ENCODE measurements at regions of chr3 and their contacts with region 1.

Region 1: GRCh38 chr3:109023656-109024254 is 70.1 kb upstream of the GUCA1C start:
- DNase-seq: peak; percentile 44
- H3K4me3 ChIP-seq: no peak overlapping the region
- H3K27ac ChIP-seq: no peak overlapping the region
- H3K4me1 ChIP-seq: no peaks in the 10 kb centered on the region
- H3K27me3 ChIP-seq: no peaks in the 10 kb centered on the region
- CTCF ChIP-seq: peak; percentile 41 to 50
- POLR2A ChIP-seq: no peak

Region 2: DNA sequence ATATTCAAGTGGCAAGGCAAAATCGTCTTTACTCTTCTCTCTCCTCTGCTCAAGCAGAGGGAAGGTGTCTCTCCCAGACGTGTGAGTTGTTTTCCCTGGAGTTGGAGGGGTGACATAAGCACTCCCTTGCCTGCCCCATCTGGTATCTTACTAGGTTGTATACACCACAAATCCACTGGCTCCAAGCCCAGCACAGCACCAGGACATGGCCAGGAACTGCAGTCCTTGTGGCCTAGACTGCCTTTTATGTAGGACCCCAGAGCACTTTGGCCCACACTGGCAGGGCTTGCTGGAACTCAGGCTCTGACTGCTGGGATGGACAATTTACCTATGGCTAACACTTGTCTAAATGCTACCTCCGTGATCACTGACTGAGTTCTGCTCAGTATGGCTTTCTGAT is 400.3 kb before region 1 on chr3:
- CTCF ChIA-PET with region 1: no interaction called
- POLR2A ChIA-PET with region 1: no interaction called
- dilution Hi-C with region 1: no loop called
- intact Hi-C with region 1: no loop called
- DNase-seq: no peak
- H3K4me3 ChIP-seq: no peak overlapping the region
- H3K27ac ChIP-seq: no peak overlapping the region
- H3K4me1 ChIP-seq: peaks cover 6% of the 10 kb centered on the region
- H3K27me3 ChIP-seq: no peaks in the 10 kb centered on the region
- CTCF ChIP-seq: no peak
- POLR2A ChIP-seq: no peak

Region 3: GRCh38 chr3:108972482-108972881 is 51.3 kb before region 1 on chr3:
- CTCF ChIA-PET with region 1: no interaction called
- POLR2A ChIA-PET with region 1: no interaction called
- dilution Hi-C with region 1: no loop called
- intact Hi-C with region 1: no loop called
- DNase-seq: no peak
- H3K4me3 ChIP-seq: no peak overlapping the region
- H3K27ac ChIP-seq: no peak overlapping the region
- H3K4me1 ChIP-seq: no peaks in the 10 kb centered on the region
- H3K27me3 ChIP-seq: no peaks in the 10 kb centered on the region
- CTCF ChIP-seq: no peak
- POLR2A ChIP-seq: no peak

Region 4: DNA sequence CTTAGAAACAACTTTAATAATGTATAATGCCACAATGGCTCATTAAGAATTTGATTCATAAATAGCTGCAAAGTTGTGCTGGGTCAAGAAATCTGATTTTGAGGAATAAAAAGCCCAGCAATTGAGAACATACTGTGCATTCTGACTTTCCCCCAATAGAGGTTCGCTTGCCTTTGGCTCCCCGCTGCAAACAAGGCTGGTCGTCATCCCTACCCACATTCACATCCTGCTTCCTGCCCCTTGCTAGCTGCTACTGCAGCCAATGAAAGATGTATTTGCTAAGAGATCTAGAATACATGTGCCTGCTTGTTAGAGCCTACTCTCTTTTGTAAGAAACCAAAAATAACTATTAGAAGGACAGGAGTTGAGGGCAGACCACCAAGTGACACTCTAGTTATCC is 18.3 kb before region 1 on chr3:
- CTCF ChIA-PET with region 1: interaction called, 10 read pairs
- POLR2A ChIA-PET with region 1: no interaction called
- dilution Hi-C with region 1: no loop called
- intact Hi-C with region 1: no loop called
- DNase-seq: no peak
- H3K4me3 ChIP-seq: no peak overlapping the region
- H3K27ac ChIP-seq: no peak overlapping the region
- H3K4me1 ChIP-seq: no peaks in the 10 kb centered on the region
- H3K27me3 ChIP-seq: no peaks in the 10 kb centered on the region
- CTCF ChIP-seq: no peak
- POLR2A ChIP-seq: no peak

Region 5: GRCh38 chr3:109045271-109046040 is 21.7 kb after region 1 on chr3:
- CTCF ChIA-PET with region 1: interaction called, 10 read pairs
- POLR2A ChIA-PET with region 1: no interaction called
- dilution Hi-C with region 1: no loop called
- intact Hi-C with region 1: no loop called
- DNase-seq: no peak
- H3K4me3 ChIP-seq: no peak overlapping the region
- H3K27ac ChIP-seq: no peak overlapping the region
- H3K4me1 ChIP-seq: no peaks in the 10 kb centered on the region
- H3K27me3 ChIP-seq: no peaks in the 10 kb centered on the region
- CTCF ChIP-seq: no peak
- POLR2A ChIP-seq: no peak

Region 6: DNA sequence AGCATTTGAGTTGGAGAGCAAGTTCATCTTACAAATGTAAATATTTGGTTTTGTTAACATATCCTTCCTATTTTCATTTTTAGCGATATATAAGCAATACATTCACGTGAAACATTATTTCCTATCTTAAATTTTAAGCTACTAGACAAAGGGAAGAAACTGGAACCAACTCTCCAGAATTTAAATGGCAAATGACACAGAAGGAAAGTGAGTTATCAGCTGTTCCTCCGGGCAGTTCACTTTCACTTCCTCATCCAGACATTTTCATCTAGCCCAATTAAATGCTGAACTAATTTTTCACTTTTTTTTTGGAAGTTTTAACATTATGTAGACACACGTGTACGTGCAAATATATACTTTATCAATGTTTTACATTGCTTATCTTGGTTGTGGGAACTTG is 35.5 kb after region 1 on chr3:
- CTCF ChIA-PET with region 1: interaction called, 10 read pairs
- POLR2A ChIA-PET with region 1: no interaction called
- dilution Hi-C with region 1: no loop called
- intact Hi-C with region 1: no loop called
- DNase-seq: no peak
- H3K4me3 ChIP-seq: no peak overlapping the region
- H3K27ac ChIP-seq: no peak overlapping the region
- H3K4me1 ChIP-seq: no peaks in the 10 kb centered on the region
- H3K27me3 ChIP-seq: no peaks in the 10 kb centered on the region
- CTCF ChIP-seq: no peak
- POLR2A ChIP-seq: no peak

Region 7: DNA sequence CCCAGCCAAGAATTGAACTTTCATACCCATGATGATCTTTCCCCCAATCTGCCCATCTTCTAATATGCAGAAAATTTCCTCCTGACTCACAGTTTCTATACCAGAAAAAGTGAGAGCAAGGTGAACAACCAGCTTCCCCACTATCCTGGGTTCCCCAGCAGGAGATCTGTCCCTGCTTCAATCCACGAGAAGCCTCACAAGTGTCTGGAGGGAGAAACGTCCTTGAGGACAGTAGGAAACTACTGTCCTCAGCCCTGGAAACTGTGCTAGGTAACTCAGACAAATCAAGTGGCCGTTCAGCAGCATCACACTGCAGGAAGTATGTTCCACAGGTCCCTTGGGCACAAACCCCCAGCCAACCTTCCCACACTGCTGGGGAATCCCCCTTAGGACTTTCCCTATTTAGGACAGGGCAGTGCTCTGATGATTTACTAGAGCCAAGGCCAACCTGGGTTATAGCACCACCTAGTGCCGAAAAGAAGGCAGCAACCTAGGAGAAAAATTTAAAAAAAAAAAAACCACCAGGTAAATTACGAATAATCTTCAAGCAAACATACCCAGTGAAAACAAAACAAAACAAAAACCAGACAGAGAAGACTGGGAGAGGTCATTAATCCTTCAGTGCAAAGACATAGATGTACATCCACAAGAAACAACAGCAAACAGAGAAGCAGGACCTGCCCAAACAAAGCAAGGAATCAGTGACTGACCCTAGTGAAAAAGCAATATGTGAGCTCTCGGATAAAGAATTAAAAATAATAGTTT is 58.2 kb after region 1 on chr3:
- CTCF ChIA-PET with region 1: interaction called, 21 read pairs
- POLR2A ChIA-PET with region 1: no interaction called
- dilution Hi-C with region 1: no loop called
- intact Hi-C with region 1: loop called (anchors 1 kb)
- DNase-seq: peak; percentile 46
- H3K4me3 ChIP-seq: no peak overlapping the region
- H3K27ac ChIP-seq: no peak overlapping the region
- H3K4me1 ChIP-seq: no peaks in the 10 kb centered on the region
- H3K27me3 ChIP-seq: no peaks in the 10 kb centered on the region
- CTCF ChIP-seq: peak; percentile 66 to 67
- POLR2A ChIP-seq: no peak

Region 8: GRCh38 chr3:109117939-109118338 is 94.2 kb after region 1 on chr3 and contains the start of gene MORC1:
- CTCF ChIA-PET with region 1: no interaction called
- POLR2A ChIA-PET with region 1: no interaction called
- dilution Hi-C with region 1: no loop called
- intact Hi-C with region 1: no loop called
- DNase-seq: no peak
- H3K4me3 ChIP-seq: no peak within 1 kb of the TSS
- H3K27ac ChIP-seq: no peak within 1 kb of the TSS
- H3K4me1 ChIP-seq: no peaks in the 10 kb centered on the region
- H3K27me3 ChIP-seq: no peaks in the 10 kb centered on the region
- CTCF ChIP-seq: no peak
- POLR2A ChIP-seq: no peak
- total RNA-seq, gene MORC1: not detected in 2 replicates